Heart right ventricle (tissue), 16 donors: ENCODE measurements at regions of chr4 and their contacts with region 1.

Region 1: GRCh38 chr4:42843694-42844093 is 48.8 kb upstream of the GRXCR1 start:
- DNase-seq: no peak
- ATAC-seq: no peak
- H3K4me3 ChIP-seq: no peak overlapping the region
- H3K27ac ChIP-seq: no peak overlapping the region
- H3K4me1 ChIP-seq: no peaks in the 10 kb centered on the region
- H3K27me3 ChIP-seq: peaks cover 0 to 1% (median 0%) of the 10 kb centered on the region in 7 donors
- CTCF ChIP-seq: no peak

Region 2: GRCh38 chr4:42302348-42302747 is 541.3 kb before region 1 on chr4:
- intact Hi-C with region 1: no loop called
- DNase-seq: no peak
- ATAC-seq: no peak
- H3K4me3 ChIP-seq: no peak overlapping the region
- H3K27ac ChIP-seq: no peak overlapping the region
- H3K4me1 ChIP-seq: peaks cover 0 to 13% (median 9%) of the 10 kb centered on the region in 9 donors
- H3K27me3 ChIP-seq: peaks cover 0 to 10% (median 0%) of the 10 kb centered on the region in 7 donors
- CTCF ChIP-seq: peak in 7 of 9 donors; percentile 15 to 38 (median 19)

Region 3: DNA sequence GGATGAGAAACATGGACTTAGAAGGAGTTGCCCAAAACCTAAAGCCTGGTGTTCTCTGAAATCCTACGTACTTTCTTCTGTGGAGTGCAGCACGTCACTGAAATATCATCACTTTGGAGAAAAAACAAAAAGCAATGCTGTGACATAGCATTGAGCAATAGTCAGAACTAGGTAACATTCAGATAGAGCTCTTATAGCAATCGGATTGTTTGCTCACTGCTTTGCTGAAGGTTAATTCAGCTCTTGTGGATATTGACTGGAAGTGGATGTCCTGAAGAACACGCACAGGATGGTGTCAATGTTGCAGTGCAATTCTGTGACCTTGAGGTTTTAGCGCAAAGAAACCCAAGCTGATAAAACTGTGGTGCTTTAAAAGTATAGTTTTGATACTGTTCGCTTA is 65.3 kb before region 1 on chr4:
- intact Hi-C with region 1: loop called in 1 of 10 experiments (anchors 2 kb)
- DNase-seq: no peak
- ATAC-seq: no peak
- H3K4me3 ChIP-seq: no peak overlapping the region
- H3K27ac ChIP-seq: no peak overlapping the region
- H3K4me1 ChIP-seq: no peaks in the 10 kb centered on the region
- H3K27me3 ChIP-seq: no peaks in the 10 kb centered on the region
- CTCF ChIP-seq: no peak